Activated T-helper 2 cell treated with anti-CD3 and anti-CD28 coated beads, Interferon-gamma antibody, Interleukin-2, Interleukin-4, amounts not matched to agents 10 μg/mL and 5 μg/mL and 100 μg/mL, durations not matched to agents 14 hours and 24 hours and 36 hours (primary cell): ENCODE measurements at regions of chr20 and their contacts with region 1.

Region 1: GRCh38 chr20:23995905-23996666 is 7.5 kb upstream of the GGTLC1 start:
- DNase-seq: peak; percentile 16
- H3K4me3 Mint-ChIP-seq: no peak overlapping the region
- H3K27ac Mint-ChIP-seq: no peak overlapping the region
- H3K4me1 Mint-ChIP-seq: peaks cover 2% of the 10 kb centered on the region
- H3K27me3 Mint-ChIP-seq: peaks cover 23% of the 10 kb centered on the region

Region 2: DNA sequence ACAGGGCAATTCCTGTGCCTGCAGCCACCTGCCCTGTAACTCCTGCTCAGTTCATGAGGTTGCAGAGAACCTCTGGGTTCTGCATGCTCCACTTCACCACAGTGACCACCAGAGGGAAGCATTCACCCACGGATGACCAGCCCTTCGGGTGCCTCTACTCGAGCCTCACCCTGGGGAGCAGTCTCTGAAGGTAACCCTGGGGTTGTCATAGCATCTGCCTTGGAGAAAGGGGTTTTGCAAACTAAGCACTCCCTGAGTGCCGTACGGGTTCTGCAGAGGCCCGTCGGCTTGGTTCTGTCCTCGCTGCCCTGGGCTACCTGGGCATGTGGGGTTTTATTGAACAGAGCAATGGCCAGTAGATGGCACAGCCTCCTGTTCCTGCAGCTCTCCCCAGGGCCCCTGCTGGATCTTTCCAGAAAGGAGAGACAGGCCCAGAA is 106.3 kb before region 1 on chr20:
- intact Hi-C with region 1: loop called (anchors 5 kb)
- DNase-seq: peak; percentile 55
- H3K4me3 Mint-ChIP-seq: no peak overlapping the region
- H3K27ac Mint-ChIP-seq: no peak overlapping the region
- H3K4me1 Mint-ChIP-seq: no peaks in the 10 kb centered on the region
- H3K27me3 Mint-ChIP-seq: peaks cover 8% of the 10 kb centered on the region

Region 3: GRCh38 chr20:23937303-23938117 is 58.6 kb before region 1 on chr20:
- intact Hi-C with region 1: loop called (anchors 10 kb)
- DNase-seq: peak; percentile 49
- H3K4me3 Mint-ChIP-seq: no peak overlapping the region
- H3K27ac Mint-ChIP-seq: no peak overlapping the region
- H3K4me1 Mint-ChIP-seq: peaks cover 1% of the 10 kb centered on the region
- H3K27me3 Mint-ChIP-seq: peaks cover 3% of the 10 kb centered on the region

Region 4: GRCh38 chr20:24100385-24101011 is 104.4 kb after region 1 on chr20:
- intact Hi-C with region 1: loop called (anchors 5 kb)
- DNase-seq: peak; percentile 50
- H3K4me3 Mint-ChIP-seq: no peak overlapping the region
- H3K27ac Mint-ChIP-seq: no peak overlapping the region
- H3K4me1 Mint-ChIP-seq: peaks cover 24% of the 10 kb centered on the region
- H3K27me3 Mint-ChIP-seq: peaks cover 9% of the 10 kb centered on the region

Region 5: DNA sequence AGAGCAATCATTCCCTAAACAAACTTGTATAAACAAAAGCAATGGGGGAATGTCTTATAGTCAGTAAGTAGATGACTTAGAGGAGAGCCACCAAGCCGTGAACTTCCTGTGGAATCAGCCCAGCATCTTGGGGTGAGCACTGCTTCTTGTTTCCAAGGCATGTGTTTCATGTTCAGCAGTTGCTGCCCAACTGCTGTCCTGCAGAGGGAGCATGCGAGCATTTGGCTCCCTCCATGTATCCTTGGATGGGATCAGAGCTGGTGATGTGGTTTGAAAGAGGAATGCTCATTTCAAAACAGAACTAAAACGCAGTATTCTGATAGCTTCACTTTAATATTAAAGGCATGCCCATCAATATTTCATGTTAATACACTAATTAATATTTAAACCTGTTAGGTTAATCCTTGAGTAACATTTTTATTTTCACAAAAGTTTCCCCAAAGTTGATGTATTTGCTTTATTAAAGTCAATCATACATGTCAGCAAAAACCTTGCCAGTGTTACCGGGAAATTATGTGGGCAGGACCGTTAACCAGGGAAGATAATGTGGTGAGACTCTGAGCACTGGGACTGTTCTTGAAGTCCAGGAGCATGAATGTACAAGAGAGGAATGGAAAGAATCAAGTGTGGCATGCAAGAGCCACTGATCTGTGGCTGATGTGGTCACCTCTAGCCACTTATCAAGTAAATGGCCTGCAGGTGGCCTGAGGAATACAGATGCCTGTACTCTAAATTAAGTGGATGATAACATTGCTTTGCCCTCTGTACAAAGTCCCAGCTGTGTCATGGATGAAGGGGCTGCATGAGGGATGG is 164.7 kb after region 1 on chr20:
- intact Hi-C with region 1: loop called (anchors 10 kb)
- DNase-seq: no peak
- H3K4me3 Mint-ChIP-seq: no peak overlapping the region
- H3K27ac Mint-ChIP-seq: no peak overlapping the region
- H3K4me1 Mint-ChIP-seq: peaks cover 9% of the 10 kb centered on the region
- H3K27me3 Mint-ChIP-seq: no peaks in the 10 kb centered on the region